Activated CD8-positive, alpha-beta T cell treated with anti-CD3 and anti-CD28 coated beads for 36 hours (primary cell): ENCODE measurements at regions of chr3 and their contacts with region 1.

Region 1: DNA sequence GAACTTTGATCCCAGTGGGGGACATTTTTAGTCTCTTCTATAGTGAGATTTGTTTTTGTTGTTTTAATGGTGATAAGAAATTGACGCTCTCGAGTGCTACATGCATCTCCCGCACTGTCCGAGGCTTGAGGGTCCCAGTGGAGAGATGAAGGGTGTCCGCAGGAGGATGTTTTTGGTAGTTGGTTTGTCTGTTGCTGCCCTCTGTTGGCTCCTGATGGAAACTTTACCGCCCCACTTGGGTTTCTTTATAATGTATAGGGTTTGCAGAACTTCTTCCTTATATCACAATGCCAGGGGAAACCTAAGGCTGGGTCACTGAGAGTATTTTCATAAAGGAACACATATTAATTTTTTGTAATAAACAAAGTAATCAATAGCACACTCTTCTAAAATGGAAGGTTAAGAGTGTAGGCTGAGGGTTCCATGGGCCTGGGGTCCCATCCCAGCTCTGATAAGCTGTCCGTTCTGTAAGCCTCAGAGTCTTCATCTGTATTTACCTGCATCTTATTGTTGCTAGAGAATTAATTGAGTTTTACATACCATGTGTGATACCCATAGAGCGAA is 185.3 kb upstream of the FEZF2 start:
- DNase-seq: peak; percentile 14
- ATAC-seq: no peak
- H3K4me3 Mint-ChIP-seq: no peak overlapping the region
- H3K27ac Mint-ChIP-seq: no peak overlapping the region
- H3K4me1 Mint-ChIP-seq: no peaks in the 10 kb centered on the region
- H3K27me3 Mint-ChIP-seq: no peaks in the 10 kb centered on the region
- CTCF ChIP-seq: peak; percentile 46

Region 2: GRCh38 chr3:62201438-62202035 is 357.1 kb before region 1 on chr3:
- CTCF ChIA-PET with region 1: interaction called, 5 read pairs
- POLR2A ChIA-PET with region 1: no interaction called
- intact Hi-C with region 1: loop called (anchors 5 kb)
- DNase-seq: no peak
- ATAC-seq: no peak
- H3K4me3 Mint-ChIP-seq: no peak overlapping the region
- H3K27ac Mint-ChIP-seq: no peak overlapping the region
- H3K4me1 Mint-ChIP-seq: no peaks in the 10 kb centered on the region
- H3K27me3 Mint-ChIP-seq: no peaks in the 10 kb centered on the region
- CTCF ChIP-seq: peak; percentile 58

Region 3: GRCh38 chr3:62587203-62588117 is 28.8 kb after region 1 on chr3:
- CTCF ChIA-PET with region 1: no interaction called
- POLR2A ChIA-PET with region 1: no interaction called
- intact Hi-C with region 1: no loop called
- DNase-seq: no peak
- ATAC-seq: no peak
- H3K4me3 Mint-ChIP-seq: no peak overlapping the region
- H3K27ac Mint-ChIP-seq: no peak overlapping the region
- H3K4me1 Mint-ChIP-seq: no peaks in the 10 kb centered on the region
- H3K27me3 Mint-ChIP-seq: peaks cover 2% of the 10 kb centered on the region
- CTCF ChIP-seq: no peak